B cell (primary cell): ENCODE measurements at regions of chr11 and their contacts with region 1.

Region 1: GRCh38 chr11:118572061-118572980 is at the start of gene ARCN1:
- DNase-seq: peak; percentile 89
- ATAC-seq: peak; percentile 92
- H3K4me3 ChIP-seq: peak within 1 kb of the TSS; percentile 76 to 100 (median 99)
- H3K4me3 Mint-ChIP-seq: peak within 1 kb of the TSS; percentile 97
- H3K27ac ChIP-seq: peak within 1 kb of the TSS; percentile 95 to 97
- H3K27ac Mint-ChIP-seq: peak within 1 kb of the TSS; percentile 94
- H3K4me1 ChIP-seq: peaks cover 19 to 21% of the 10 kb centered on the region in 2 donors
- H3K4me1 Mint-ChIP-seq: peaks cover 44% of the 10 kb centered on the region
- H3K27me3 ChIP-seq: no peaks in the 10 kb centered on the region
- H3K27me3 Mint-ChIP-seq: no peaks in the 10 kb centered on the region
- CTCF ChIP-seq: no peak
- total RNA-seq, gene ARCN1: 74.7 and 83.2 TPM in 2 replicates

Region 2: DNA sequence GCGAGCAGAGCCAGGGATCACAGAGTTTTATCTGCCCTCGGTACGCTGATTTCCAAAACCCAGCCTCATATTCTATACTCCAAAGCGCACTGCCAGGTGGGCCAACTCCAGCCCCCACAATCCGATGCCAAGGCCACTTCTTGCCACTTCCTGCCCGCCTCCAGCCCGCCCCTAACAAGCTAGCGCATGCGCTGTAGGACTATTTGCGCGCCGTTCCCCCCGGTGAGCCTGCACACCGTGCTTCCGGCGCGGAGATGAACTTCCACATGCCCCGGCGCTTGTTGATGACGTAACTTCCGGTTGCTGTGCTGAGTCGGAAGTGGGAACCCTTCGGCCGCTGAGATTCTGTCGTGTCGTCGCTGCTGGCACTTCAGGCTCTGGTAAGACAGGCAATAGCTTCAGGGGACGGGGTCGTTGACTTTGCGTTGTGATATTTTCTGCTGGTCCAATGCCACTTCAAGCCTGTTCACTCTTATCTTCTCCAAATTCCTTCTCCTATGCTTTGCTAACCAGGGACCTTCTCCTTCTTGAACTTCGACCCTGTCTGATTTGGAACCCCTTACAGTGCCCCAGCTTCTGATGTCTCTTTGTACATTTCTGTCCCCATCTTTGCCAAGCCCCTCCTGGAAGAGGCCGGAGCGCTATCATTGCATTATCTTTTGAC is 212.9 kb before region 1 on chr11 and contains the start of gene UBE4A:
- CTCF ChIA-PET with region 1: no interaction called
- POLR2A ChIA-PET with region 1: no interaction called
- intact Hi-C with region 1: loop called (anchors 2 kb)
- DNase-seq: peak; percentile 97
- ATAC-seq: peak; percentile 91
- H3K4me3 ChIP-seq: peak within 1 kb of the TSS; percentile 82 to 98 (median 92)
- H3K4me3 Mint-ChIP-seq: peak within 1 kb of the TSS; percentile 98
- H3K27ac ChIP-seq: peak within 1 kb of the TSS; percentile 73 to 93
- H3K27ac Mint-ChIP-seq: peak within 1 kb of the TSS; percentile 96
- H3K4me1 ChIP-seq: peaks cover 18 to 23% of the 10 kb centered on the region in 2 donors
- H3K4me1 Mint-ChIP-seq: peaks cover 39% of the 10 kb centered on the region
- H3K27me3 ChIP-seq: no peaks in the 10 kb centered on the region
- H3K27me3 Mint-ChIP-seq: no peaks in the 10 kb centered on the region
- CTCF ChIP-seq: no peak
- total RNA-seq, gene UBE4A: 37.3 and 37.7 TPM in 2 replicates

Region 3: DNA sequence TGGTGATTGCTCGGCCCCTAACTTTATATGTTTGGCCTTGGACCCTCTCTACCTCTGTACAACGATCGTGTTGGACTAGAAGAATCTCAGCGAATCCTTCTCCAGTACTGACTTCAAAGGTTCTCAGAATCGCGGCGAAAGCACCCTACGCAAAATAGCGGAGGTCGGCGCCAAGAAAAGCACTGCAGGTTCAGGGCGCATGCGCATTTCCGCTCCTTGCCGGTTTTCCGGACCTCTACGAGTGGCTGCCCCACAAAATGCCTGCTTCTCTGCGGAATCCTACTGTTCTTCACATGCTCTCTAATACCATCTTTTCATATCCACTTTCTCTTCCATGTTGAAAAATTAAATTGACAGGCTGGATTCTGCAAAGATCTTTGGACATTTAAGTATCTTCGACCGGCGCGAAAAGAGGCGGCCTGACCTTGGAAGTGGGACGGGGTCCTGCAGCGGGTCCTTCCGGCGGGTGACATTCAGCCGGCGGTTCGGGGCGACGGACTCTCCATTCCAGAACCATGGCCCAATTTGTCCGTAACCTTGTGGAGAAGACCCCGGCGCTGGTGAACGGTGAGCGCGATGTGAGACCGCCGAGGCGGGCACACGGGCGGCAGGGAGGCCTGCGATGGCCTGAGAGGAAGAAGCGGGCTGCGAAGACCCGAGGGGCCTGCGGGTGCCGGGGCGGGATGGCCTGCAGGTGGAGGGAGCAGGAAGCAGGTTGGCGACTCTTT is 171.0 kb before region 1 on chr11 and contains the start of gene ATP5MG:
- CTCF ChIA-PET with region 1: no interaction called
- POLR2A ChIA-PET with region 1: no interaction called
- intact Hi-C with region 1: loop called (anchors 5 kb)
- DNase-seq: peak; percentile 97
- ATAC-seq: peak; percentile 84
- H3K4me3 ChIP-seq: peak within 1 kb of the TSS; percentile 77 to 96 (median 81)
- H3K4me3 Mint-ChIP-seq: peak within 1 kb of the TSS; percentile 98
- H3K27ac ChIP-seq: peak within 1 kb of the TSS; percentile 77 to 85
- H3K27ac Mint-ChIP-seq: peak within 1 kb of the TSS; percentile 100
- H3K4me1 ChIP-seq: peaks cover 27 to 32% of the 10 kb centered on the region in 2 donors
- H3K4me1 Mint-ChIP-seq: peaks cover 55% of the 10 kb centered on the region
- H3K27me3 ChIP-seq: no peaks in the 10 kb centered on the region
- H3K27me3 Mint-ChIP-seq: no peaks in the 10 kb centered on the region
- CTCF ChIP-seq: peak; percentile 18
- total RNA-seq, gene ATP5MG: 111 and 118 TPM in 2 replicates

Region 4: DNA sequence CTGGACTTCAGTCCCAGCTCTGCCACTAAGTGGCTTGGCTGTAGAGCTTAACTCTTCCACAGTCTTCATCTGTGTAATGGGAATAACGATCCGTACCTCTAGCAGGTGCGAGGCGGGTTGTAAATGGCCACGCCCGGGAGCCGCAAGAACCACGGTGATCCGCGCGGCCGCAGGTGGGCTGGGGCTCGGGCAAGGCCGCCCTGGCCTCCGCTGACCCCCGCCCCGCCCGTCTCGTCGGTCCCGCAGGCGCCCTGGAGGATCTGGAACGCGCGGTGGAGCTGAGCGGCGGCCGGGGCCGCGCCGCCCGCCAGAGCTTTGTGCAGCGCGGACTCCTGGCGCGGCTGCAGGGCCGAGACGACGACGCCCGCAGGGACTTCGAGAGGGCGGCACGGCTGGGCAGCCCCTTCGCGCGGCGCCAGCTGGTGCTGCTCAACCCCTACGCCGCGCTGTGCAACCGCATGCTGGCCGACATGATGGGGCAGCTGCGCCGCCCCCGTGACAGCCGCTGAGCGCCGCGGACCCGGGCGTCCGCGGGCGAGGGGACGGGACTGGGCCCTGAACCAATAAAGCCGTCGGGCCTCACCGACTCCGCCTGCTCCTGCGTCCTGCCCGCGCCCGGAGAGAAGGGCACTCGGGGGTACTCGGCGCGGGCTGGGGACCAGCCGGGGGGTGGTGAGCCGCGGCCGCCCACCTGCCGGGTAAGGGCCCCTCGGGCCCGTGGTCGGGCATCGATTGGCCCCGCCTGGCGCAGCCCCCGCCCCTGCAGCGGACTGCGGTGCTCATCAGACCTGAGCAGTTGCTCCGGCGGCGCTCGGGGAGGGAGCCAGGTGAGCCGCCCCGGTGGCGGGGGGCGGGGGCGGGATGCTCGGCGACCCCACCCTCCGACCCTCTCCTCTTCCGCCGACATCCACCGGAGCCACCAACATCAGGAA is 41.6 kb before region 1 on chr11 and contains the start of gene TMEM25:
- CTCF ChIA-PET with region 1: interaction called, 3 read pairs
- POLR2A ChIA-PET with region 1: no interaction called
- intact Hi-C with region 1: loop called (anchors 2 kb)
- DNase-seq: peak; percentile 72
- ATAC-seq: peak; percentile 84
- H3K4me3 ChIP-seq: peak within 1 kb of the TSS; percentile 1 to 87 (median 73)
- H3K4me3 Mint-ChIP-seq: peak within 1 kb of the TSS; percentile 97
- H3K27ac ChIP-seq: peak within 1 kb of the TSS in 1 of 2 donors; percentile 42
- H3K27ac Mint-ChIP-seq: peak within 1 kb of the TSS; percentile 86
- H3K4me1 ChIP-seq: peaks cover 14 to 21% of the 10 kb centered on the region in 2 donors
- H3K4me1 Mint-ChIP-seq: peaks cover 24% of the 10 kb centered on the region
- H3K27me3 ChIP-seq: no peaks in the 10 kb centered on the region
- H3K27me3 Mint-ChIP-seq: no peaks in the 10 kb centered on the region
- CTCF ChIP-seq: no peak
- total RNA-seq, gene TMEM25: 16.3 and 16.9 TPM in 2 replicates

Region 5: DNA sequence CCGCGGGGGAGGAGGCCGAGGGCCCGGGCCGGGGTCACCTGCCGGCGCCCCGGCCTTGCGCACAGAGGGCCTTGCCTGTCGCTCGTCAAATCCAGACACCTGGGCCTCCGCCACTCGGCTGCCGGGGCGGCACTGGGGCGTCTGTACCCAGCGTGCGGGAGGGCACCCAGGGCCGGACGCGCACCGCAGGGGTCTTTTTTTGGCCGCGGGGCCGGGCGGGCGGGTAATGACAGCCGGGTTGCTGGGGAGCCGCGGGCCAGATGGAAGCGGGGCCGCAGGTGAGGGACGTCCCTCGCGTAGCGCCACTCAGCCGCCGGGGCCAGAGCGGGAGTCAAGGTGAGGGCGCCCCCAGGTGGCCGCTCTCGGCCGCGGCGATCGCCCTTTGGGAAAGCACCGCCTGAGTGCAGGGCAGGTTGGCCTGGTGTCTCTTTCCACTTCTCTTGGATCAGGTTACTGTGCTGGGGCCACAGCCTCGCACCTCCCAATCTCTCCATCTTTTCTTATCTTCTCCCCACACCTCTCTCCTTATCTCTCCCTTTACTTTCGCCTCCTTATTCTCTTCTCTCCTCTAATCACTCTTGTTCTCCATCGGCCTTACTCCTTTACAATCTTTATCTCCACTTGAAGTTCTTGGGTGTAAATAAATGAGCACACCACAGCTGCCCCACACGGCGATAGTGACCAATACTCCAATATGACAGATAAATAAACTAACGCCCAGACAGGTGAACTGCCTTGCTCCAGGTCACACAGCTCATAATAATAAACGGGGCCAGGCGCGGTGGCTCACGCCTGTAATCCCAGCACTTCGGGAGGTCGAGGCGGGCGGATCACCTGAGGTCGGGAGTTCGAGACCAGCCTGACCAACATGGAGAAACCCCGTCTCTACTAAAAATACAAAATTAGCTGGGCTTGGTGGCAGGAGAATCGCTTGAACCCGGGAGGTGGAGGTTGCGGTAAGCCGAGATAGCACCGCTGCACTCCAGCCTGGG is 38.8 kb after region 1 on chr11:
- CTCF ChIA-PET with region 1: interaction called, 7 read pairs
- POLR2A ChIA-PET with region 1: interaction called, 4 read pairs
- intact Hi-C with region 1: loop called (anchors 1 kb)
- DNase-seq: peak; percentile 89
- ATAC-seq: peak; percentile 59
- H3K4me3 ChIP-seq: peak overlapping the region in 4 of 5 experiments; percentile 35 to 60 (median 52)
- H3K4me3 Mint-ChIP-seq: peak overlapping the region; percentile 75
- H3K27ac ChIP-seq: no peak overlapping the region
- H3K27ac Mint-ChIP-seq: peak overlapping the region; percentile 59
- H3K4me1 ChIP-seq: peaks cover 26 to 38% of the 10 kb centered on the region in 2 donors
- H3K4me1 Mint-ChIP-seq: peaks cover 25% of the 10 kb centered on the region
- H3K27me3 ChIP-seq: peaks cover 0 to 56% (median 23%) of the 10 kb centered on the region in 4 experiments
- H3K27me3 Mint-ChIP-seq: peaks cover 28% of the 10 kb centered on the region
- CTCF ChIP-seq: peak; percentile 96

Region 6: DNA sequence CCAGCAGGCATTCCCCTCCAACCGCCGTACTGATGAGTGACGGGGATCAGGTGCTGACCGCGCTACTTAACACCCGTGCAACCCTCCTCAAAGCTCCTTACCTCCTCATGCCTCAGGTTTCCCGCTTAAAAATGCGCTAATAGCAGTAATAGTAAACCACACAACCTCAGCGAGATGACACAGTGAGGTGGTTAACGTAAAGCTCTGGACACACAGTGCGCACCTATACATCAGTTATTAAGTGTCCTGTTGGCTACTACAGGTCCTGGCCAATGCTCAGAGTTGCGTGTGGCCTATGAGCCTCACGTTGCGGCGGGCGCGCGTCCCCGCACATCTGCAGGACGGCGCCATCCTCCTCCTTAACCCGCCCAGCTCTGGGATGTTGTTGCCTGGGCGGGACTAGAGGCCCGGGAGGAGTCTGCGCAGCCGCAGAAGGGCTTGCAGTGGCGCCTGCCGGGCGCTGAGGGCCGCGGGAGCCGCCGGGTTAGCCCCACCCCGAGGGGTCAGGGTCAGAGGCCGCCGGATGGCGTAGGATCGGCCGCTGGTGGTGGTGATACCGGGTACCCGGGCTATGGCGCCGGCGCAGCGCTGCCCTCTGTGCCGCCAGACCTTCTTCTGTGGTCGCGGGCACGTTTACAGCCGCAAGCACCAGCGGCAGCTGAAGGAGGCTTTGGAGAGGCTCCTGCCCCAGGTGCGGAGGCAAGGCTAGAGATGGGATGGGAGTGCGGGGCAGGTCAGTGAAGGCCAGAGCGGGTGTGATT is 425.5 kb after region 1 on chr11 and contains the start of gene CENATAC:
- CTCF ChIA-PET with region 1: no interaction called
- POLR2A ChIA-PET with region 1: no interaction called
- intact Hi-C with region 1: loop called (anchors 5 kb)
- DNase-seq: peak; percentile 94
- ATAC-seq: peak; percentile 95
- H3K4me3 ChIP-seq: peak within 1 kb of the TSS; percentile 76 to 90 (median 82)
- H3K4me3 Mint-ChIP-seq: peak within 1 kb of the TSS; percentile 99
- H3K27ac ChIP-seq: peak within 1 kb of the TSS; percentile 52 to 77
- H3K27ac Mint-ChIP-seq: peak within 1 kb of the TSS; percentile 94
- H3K4me1 ChIP-seq: peaks cover 17 to 22% of the 10 kb centered on the region in 2 donors
- H3K4me1 Mint-ChIP-seq: peaks cover 35% of the 10 kb centered on the region
- H3K27me3 ChIP-seq: no peaks in the 10 kb centered on the region
- H3K27me3 Mint-ChIP-seq: no peaks in the 10 kb centered on the region
- CTCF ChIP-seq: no peak
- total RNA-seq, gene CENATAC: 122 and 138 TPM in 2 replicates